GM10248 (cell line): ENCODE measurements at regions of chr9 and their contacts with region 1.

Region 1: DNA sequence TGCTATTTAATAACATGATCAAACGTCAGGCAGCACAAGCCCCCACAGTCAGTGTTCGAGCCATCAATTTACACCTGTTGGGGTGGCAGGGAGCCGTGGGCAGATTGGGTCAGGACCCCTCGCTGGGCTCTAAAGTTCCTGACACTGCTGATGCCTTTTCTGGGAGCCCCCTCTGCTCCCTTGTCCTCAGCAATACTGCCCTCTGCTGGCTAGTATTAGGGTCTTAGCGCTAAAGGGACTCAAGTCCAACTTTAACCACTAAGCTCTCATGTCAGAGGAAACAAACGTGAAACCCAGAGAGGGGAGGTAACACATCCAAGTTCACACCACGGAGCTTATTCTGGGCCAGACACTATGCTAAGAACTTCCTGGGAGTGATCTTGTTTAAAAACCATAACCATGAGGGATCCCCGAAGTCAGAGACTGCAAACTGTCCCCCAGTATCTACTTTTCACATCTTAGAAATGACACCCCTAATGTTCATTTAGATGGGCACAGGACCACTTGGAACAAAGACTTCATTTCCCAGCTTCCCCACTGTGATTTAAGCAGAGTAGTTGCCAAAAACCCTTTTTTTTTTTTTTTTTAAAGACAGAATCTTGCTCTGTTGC is 20.4 kb downstream of the ANKS6 start:
- DNase-seq: peak; percentile 77
- CTCF ChIP-seq: peak; percentile 77

Region 2: GRCh38 chr9:98146101-98146991 is 629.6 kb before region 1 on chr9:
- CTCF ChIA-PET with region 1: no interaction called
- POLR2A ChIA-PET with region 1: no interaction called
- DNase-seq: peak; percentile 48
- CTCF ChIP-seq: no peak

Region 3: GRCh38 chr9:98315551-98316060 is 460.3 kb before region 1 on chr9:
- CTCF ChIA-PET with region 1: interaction called, 111 read pairs
- POLR2A ChIA-PET with region 1: interaction called, 3 read pairs
- DNase-seq: peak; percentile 88
- CTCF ChIP-seq: peak; percentile 83

Region 4: GRCh38 chr9:98730871-98731270 is 45.1 kb before region 1 on chr9:
- CTCF ChIA-PET with region 1: interaction called, 12 read pairs
- POLR2A ChIA-PET with region 1: no interaction called
- DNase-seq: no peak
- CTCF ChIP-seq: no peak

Region 5: DNA sequence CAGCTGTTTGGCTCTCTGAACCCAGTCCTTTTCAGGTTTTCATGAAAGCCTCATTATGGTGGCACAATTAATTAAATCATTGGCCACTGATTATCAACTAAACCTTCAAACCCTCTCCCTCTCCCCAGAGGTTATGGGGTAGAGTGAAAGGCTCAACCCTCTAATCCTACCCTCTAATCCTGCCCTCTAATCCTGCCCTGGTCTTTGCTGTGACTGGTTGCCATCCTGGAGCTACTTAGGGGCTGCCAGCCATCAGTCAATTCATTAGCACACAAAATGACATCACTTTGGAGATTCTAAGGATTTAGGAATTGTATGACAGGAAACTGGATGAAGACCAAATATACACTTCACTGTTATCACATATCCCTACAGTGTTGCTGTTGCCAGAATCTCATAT is 15.7 kb before region 1 on chr9:
- CTCF ChIA-PET with region 1: interaction called, 53 read pairs
- POLR2A ChIA-PET with region 1: no interaction called
- DNase-seq: no peak
- CTCF ChIP-seq: no peak

Region 6: DNA sequence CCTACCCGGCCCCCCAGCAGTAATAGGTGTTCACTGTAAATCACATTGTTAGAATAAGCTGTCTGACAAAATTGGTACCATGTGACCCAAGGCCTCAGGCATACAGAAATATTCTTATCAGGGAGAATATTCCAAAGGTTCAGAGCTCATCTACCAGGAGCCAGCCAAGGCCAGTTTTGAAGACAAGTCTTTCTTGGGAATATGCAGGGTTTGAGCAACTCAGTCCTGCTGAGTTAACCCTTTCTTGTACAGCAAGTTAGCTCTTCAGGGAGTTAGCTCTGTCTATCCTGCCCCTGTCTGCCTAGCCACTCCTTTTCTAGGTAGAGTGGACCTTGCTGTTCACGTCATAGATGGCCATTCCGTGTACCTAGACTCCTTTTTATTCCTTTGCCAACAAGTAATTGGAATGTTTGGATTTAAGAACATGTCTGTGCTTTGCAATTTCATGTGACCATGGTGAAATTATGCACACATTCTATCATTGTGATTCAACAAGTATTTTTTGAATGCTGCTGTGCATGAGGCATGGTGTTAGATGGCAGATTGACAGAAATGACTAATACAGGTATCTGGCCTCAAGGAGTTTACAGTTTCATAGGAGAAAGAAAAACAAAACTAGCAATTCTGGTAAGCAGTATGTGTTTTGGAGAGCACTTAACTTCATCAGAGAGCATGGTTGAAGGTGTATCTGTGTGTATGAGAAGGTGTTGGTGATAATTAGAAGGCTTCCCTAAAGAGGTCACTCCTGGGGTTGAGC is 351.6 kb after region 1 on chr9:
- CTCF ChIA-PET with region 1: no interaction called
- POLR2A ChIA-PET with region 1: no interaction called
- DNase-seq: no peak
- CTCF ChIP-seq: no peak